ENCODE measurements at regions of chr2 and their contacts with region 1.

Region 1: GRCh38 chr2:73212448-73213176 is 1.4 kb upstream of the SMYD5 start:
- DNase-seq: peak; percentile 86
- ATAC-seq: peak; percentile 77
- H3K4me3 Mint-ChIP-seq: no peak overlapping the region
- H3K27ac Mint-ChIP-seq: peak overlapping the region; percentile 57
- H3K4me1 Mint-ChIP-seq: peaks cover 35% of the 10 kb centered on the region
- H3K27me3 Mint-ChIP-seq: peaks cover 19% of the 10 kb centered on the region
- CTCF ChIP-seq: peak; percentile 81

Region 2: DNA sequence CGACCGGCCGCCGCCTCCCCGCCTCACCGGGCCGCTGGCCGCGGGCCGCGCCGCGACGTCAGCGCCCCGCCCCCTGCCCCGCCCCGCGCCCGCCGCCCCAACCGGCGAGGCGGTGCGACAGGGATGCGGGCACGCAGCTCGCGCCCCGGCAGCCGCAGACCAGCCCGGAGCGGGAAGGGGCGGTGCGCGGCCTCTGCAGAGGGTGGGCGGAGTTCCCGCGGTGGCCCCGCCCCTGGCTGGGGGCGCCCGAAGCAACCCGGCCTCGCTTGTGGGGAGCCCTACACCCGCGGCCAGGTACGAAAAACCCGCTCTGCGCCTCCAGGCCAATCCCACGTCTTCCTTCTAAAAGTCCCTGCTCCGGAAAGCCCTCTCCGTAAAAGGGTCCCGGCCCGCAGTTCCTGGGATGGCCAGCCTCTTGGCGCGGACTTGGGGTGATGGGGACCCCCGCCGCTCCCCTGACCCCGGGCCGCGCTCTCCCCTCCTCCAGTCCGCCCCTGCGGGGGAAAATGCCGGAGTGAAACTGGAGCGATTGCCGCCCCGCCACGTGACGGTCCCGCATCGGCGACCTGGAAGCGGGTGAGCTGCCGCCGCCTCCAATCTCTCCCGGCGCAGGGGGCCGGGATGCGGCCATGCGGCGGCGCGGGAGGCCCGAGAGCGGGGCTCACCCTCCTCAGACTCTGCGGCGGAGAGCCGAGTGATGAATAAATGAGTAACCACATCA is 99.5 kb before region 1 on chr2 and contains the start of gene RAB11FIP5:
- CTCF ChIA-PET with region 1: interaction called, 11 read pairs
- POLR2A ChIA-PET with region 1: no interaction called
- DNase-seq: peak; percentile 86
- ATAC-seq: peak; percentile 87
- H3K4me3 Mint-ChIP-seq: peak within 1 kb of the TSS; percentile 83
- H3K27ac Mint-ChIP-seq: no peak within 1 kb of the TSS
- H3K4me1 Mint-ChIP-seq: peaks cover 23% of the 10 kb centered on the region
- H3K27me3 Mint-ChIP-seq: peaks cover 26% of the 10 kb centered on the region
- CTCF ChIP-seq: no peak
- total RNA-seq, gene RAB11FIP5: 14.0 to 16.0 TPM (median 14.3 TPM) in 3 replicates

Region 3: DNA sequence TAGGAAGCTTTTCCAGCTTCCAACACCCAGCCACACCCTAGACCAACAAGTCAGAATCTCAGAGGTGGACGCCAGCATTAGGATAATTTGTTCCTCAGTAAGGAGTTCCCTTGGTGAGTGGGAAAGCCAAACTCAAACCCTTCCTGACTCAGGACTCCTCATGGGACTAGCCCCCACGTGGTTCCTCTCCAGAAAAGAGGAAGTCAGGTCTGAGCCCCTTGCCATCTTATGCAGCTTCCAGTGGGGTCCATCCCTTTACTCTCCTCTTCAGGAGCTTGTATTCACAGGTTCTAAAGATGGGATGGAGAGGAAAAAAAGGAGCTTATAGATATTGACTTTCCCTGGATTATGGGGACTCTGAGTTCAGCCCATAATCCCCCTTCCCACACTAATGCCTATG is 25.1 kb before region 1 on chr2:
- CTCF ChIA-PET with region 1: interaction called, 29 read pairs
- POLR2A ChIA-PET with region 1: no interaction called
- DNase-seq: no peak
- ATAC-seq: no peak
- H3K4me3 Mint-ChIP-seq: no peak overlapping the region
- H3K27ac Mint-ChIP-seq: no peak overlapping the region
- H3K4me1 Mint-ChIP-seq: peaks cover 12% of the 10 kb centered on the region
- H3K27me3 Mint-ChIP-seq: peaks cover 72% of the 10 kb centered on the region
- CTCF ChIP-seq: no peak

Region 4: GRCh38 chr2:73202156-73203054 is 10.2 kb before region 1 on chr2 and contains the start of gene NOTO:
- CTCF ChIA-PET with region 1: interaction called, 62 read pairs
- POLR2A ChIA-PET with region 1: interaction called, 6 read pairs
- DNase-seq: peak; percentile 65
- ATAC-seq: peak; percentile 77
- H3K4me3 Mint-ChIP-seq: peak within 1 kb of the TSS; percentile 61
- H3K27ac Mint-ChIP-seq: no peak within 1 kb of the TSS
- H3K4me1 Mint-ChIP-seq: peaks cover 8% of the 10 kb centered on the region
- H3K27me3 Mint-ChIP-seq: peaks cover 88% of the 10 kb centered on the region
- CTCF ChIP-seq: no peak
- total RNA-seq, gene NOTO: 0.15 to 0.23 TPM (median 0.18 TPM) in 3 replicates

Region 5: DNA sequence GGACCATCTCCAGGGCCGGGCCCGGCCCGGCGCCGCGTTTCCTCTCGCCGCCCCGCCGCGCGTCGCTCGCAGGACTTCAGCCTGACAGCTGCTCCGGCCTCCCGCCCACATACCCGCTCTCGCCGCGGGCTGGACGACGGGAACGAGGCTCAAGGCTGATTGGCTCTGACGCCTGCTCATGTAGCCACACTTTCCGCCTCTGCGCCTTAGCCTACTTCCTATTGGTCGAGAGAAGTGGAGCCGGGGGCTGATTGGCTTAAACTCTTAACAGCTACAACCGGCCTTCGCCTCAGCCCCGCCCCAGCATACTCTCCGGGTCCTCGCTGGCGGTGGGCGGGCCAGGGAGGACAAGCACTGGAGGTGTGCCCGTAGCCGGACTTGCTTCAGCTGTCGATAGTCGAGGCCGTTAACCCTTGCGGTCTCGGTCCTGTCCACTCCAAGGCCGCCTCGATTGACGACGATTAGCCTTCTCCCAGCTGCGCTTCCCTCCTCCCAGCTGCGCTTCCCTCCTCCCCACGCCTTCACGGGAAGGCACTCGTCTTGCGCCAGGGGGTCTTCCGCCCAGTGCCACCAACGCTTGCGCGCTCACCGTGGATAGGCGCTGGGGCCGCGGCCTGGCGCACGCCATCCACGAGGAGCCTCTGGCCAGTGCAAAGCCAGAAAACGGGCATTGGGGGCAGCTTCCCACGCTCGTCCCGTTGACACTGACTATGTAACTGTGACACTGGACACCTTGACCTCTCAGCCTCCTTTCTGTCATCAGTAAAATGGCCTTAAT is 20.7 kb after region 1 on chr2 and contains the start of gene PRADC1:
- CTCF ChIA-PET with region 1: interaction called, 39 read pairs
- POLR2A ChIA-PET with region 1: interaction called, 4 read pairs
- DNase-seq: peak; percentile 98
- ATAC-seq: peak; percentile 93
- H3K4me3 Mint-ChIP-seq: peak within 1 kb of the TSS; percentile 100
- H3K27ac Mint-ChIP-seq: peak within 1 kb of the TSS; percentile 90
- H3K4me1 Mint-ChIP-seq: peaks cover 29% of the 10 kb centered on the region
- H3K27me3 Mint-ChIP-seq: no peaks in the 10 kb centered on the region; the same call in 1 of the 2 replicates
- CTCF ChIP-seq: no peak
- total RNA-seq, gene PRADC1: 11.4 to 12.9 TPM (median 12.2 TPM) in 3 replicates

Region 6: GRCh38 chr2:73238976-73239375 is 26.4 kb after region 1 on chr2:
- CTCF ChIA-PET with region 1: interaction called, 39 read pairs
- POLR2A ChIA-PET with region 1: no interaction called
- DNase-seq: no peak
- ATAC-seq: no peak
- H3K4me3 Mint-ChIP-seq: no peak overlapping the region
- H3K27ac Mint-ChIP-seq: peak overlapping the region; percentile 98
- H3K4me1 Mint-ChIP-seq: peaks cover 31% of the 10 kb centered on the region
- H3K27me3 Mint-ChIP-seq: no peaks in the 10 kb centered on the region
- CTCF ChIP-seq: no peak

Region 7: DNA sequence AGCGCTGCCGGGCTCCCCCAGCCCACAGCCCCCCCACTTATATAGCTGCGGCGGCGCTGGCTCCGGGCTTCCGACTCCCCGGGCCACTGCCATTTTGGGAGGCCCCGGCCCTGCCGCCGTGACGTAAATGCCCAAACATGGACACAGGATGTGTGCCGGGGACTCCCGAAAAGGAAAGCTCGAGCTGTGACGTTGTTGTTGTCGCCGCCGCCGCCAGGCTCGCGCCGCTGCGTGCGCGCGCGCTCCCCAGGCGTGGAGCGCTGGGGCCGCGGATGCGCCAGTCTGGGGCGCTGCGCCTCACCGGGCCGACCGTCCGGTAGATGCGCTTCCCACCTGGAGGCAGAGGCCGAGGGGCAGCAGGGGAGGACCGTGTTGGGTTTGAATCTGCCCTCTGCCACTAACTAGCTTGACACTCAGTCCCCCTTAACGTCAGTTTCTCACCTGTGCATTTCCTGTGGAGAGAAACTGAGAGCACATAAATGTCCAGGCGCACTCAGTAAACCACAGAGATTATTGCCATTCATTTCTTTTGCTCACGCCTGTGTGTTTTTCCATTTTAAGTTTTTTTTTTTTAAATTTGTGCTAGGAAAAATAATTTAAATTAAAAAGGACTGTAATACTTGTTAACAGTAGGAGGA is 81.0 kb after region 1 on chr2 and contains the start of gene EGR4:
- CTCF ChIA-PET with region 1: interaction called, 14 read pairs
- POLR2A ChIA-PET with region 1: no interaction called
- DNase-seq: peak; percentile 88
- ATAC-seq: peak; percentile 72
- H3K4me3 Mint-ChIP-seq: peak within 1 kb of the TSS; percentile 68
- H3K27ac Mint-ChIP-seq: no peak within 1 kb of the TSS
- H3K4me1 Mint-ChIP-seq: peaks cover 2% of the 10 kb centered on the region; the same call in 1 of the 2 replicates
- H3K27me3 Mint-ChIP-seq: peaks cover 97% of the 10 kb centered on the region
- CTCF ChIP-seq: no peak
- total RNA-seq, gene EGR4: 0.09 to 0.14 TPM (median 0.13 TPM) in 3 replicates

Measured in WTC11 (cell line).